MCF 10A (cell line): ENCODE measurements at regions of chr11 and their contacts with region 1.

Region 1: DNA sequence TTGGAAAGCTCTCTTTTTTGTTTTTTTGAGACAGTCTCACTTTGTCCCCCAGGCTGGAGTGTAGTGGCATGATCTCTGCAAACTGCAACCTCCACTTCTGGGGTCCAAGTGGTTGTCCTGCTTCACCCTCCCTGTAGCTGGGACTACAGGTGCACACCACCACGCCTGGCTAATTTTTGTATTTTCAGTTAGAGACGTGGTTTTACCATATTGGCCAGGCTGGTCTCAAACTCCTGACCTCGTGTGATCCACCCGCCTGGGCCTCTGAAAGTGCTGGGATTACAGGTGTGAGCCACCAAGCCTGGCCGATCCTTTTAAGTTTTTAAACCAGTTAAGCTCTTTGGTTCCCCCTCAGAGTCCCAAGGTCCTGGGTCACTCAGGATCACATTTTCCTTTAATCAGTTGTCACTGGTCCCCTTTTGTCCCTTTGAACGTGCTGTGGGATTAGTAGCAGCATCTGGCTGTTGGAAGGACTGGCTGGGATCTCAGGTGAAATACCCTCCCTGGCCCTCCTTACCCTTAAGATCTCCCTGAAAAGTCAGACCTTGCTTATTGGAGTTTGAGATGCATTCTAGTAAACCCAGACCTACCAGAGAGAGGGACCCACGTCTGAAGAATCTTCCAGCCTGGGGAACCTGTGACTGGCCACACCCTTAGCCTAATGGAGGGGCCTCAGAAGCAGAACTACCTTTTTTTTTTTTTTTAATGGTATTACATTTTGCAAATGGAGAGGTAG is 8.1 kb downstream of the MALAT1 start:
- DNase-seq: peak; percentile 70
- H3K4me3 Mint-ChIP-seq: no peak overlapping the region
- H3K27ac Mint-ChIP-seq: no peak overlapping the region
- H3K4me1 Mint-ChIP-seq: peaks cover 22% of the 10 kb centered on the region
- H3K27me3 Mint-ChIP-seq: no peaks in the 10 kb centered on the region
- CTCF ChIP-seq: no peak

Region 2: GRCh38 chr11:65254724-65255123 is 252.2 kb before region 1 on chr11:
- CTCF ChIA-PET with region 1: no interaction called
- POLR2A ChIA-PET with region 1: no interaction called
- intact Hi-C with region 1: no loop called
- DNase-seq: no peak
- H3K4me3 Mint-ChIP-seq: no peak overlapping the region
- H3K27ac Mint-ChIP-seq: no peak overlapping the region
- H3K4me1 Mint-ChIP-seq: peaks cover 14% of the 10 kb centered on the region
- H3K27me3 Mint-ChIP-seq: no peaks in the 10 kb centered on the region
- CTCF ChIP-seq: no peak

Region 3: DNA sequence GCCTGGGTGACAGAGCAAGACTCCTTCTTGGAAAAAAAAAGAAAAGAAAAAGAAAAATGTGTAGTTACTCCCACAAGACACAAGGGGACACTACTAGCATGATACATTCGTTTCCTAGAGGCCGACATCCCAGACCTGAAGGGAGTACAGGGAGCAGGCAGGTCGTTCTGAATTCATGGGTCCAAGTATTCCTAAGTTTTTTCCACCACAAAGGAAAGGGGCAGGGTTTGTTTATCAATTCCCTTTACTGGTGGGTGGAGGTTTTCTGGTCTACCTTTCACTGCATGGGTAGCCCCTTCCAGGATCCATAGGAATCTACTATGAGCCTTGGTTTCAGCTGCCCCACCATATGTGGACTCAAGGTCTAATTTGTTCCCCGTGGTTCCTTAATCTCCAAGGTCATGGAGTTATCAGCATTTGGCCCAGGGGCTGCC is 140.6 kb before region 1 on chr11:
- CTCF ChIA-PET with region 1: interaction called, 24 read pairs
- POLR2A ChIA-PET with region 1: interaction called, 7 read pairs
- intact Hi-C with region 1: loop called (anchors 1 kb)
- DNase-seq: peak; percentile 87
- H3K4me3 Mint-ChIP-seq: no peak overlapping the region
- H3K27ac Mint-ChIP-seq: no peak overlapping the region
- H3K4me1 Mint-ChIP-seq: peaks cover 9% of the 10 kb centered on the region
- H3K27me3 Mint-ChIP-seq: no peaks in the 10 kb centered on the region
- CTCF ChIP-seq: peak; percentile 72

Region 4: GRCh38 chr11:65440831-65441499 is 66.0 kb before region 1 on chr11:
- CTCF ChIA-PET with region 1: interaction called, 11 read pairs
- POLR2A ChIA-PET with region 1: interaction called, 213 read pairs
- intact Hi-C with region 1: no loop called
- DNase-seq: peak; percentile 40
- H3K4me3 Mint-ChIP-seq: peak overlapping the region; percentile 41
- H3K27ac Mint-ChIP-seq: peak overlapping the region; percentile 93
- H3K4me1 Mint-ChIP-seq: peaks cover 72% of the 10 kb centered on the region
- H3K27me3 Mint-ChIP-seq: no peaks in the 10 kb centered on the region
- CTCF ChIP-seq: no peak

Region 5: DNA sequence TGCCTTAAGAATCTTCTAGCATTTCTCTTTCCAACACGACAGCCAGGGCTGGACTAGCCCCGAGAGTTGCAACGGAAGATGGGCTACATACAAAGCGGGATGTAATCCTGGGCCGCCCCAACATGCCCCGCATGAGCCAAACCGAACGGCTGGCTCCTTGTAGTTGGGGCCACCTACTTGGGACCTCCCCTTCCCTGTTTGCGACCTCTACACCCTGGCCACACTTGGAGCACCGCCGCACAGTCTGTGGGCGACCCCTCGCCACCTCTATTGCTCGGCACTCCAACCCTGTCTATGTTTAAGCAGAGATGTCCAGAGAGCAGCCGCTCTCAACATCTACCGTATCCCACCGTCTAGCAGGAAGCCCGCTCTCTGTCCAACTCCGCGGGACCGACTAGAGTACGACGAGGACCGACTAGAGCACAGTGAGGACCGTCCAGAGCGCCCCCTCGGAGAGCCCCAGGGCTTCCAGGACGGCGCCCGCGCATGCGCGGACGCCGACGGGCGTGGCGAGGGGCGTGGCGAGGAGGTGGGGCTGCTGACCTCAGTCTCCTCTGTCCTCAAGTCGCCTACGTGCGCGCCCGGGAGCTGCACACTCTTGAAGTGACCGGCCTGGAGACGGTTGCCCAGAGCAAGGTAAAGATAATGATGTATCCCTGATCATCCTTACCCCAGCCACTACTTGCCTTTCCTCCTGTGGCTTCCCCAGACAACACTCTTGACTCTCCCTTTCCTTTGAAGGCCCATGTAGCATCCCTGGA is 52.1 kb before region 1 on chr11:
- CTCF ChIA-PET with region 1: interaction called, 5 read pairs
- POLR2A ChIA-PET with region 1: interaction called, 213 read pairs
- intact Hi-C with region 1: no loop called
- DNase-seq: no peak
- H3K4me3 Mint-ChIP-seq: peak overlapping the region; percentile 66
- H3K27ac Mint-ChIP-seq: peak overlapping the region; percentile 27
- H3K4me1 Mint-ChIP-seq: peaks cover 9% of the 10 kb centered on the region
- H3K27me3 Mint-ChIP-seq: no peaks in the 10 kb centered on the region
- CTCF ChIP-seq: no peak

Region 6: DNA sequence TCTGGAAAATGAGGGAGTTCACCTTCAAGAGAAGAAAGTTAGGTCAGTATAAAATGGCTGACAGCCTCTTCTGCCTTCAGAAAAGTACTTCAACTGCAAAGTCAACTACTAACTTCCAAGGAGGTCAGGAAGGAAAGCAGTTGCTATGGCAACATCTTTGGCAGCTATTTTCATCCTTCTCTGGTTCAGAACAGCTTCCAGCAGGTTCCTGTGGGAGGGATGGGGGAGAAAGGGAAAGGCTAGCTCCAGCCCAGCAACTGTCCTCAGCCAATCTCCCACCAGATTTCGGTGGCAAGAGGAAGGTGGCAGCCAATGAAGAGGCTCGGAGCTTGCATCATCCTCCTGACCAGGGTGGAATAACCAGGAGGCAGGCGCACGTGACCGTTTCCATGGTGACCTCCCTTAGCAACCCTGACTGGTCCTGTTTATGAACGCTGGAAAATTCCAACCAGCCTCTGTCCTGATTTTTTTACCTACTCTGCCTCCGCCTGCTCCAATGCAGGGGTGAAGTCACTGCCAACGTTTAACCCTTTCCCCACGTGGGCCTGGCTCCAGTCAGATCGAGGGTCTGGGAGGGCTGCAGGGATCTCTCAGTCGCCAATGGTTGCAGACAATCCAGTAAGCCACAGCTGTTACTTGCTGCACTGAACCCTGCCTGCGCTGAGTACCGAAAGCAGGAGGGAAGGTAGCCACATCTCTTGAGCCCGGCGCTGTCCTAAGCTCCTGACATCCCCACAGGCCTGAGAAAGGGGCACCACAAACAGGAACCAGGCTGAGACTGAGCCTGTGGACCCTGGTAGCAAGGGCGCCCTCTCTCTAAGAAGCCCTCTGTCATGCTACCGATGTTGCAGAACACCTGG is 19.3 kb before region 1 on chr11:
- CTCF ChIA-PET with region 1: interaction called, 10 read pairs
- POLR2A ChIA-PET with region 1: interaction called, 1,360 read pairs
- intact Hi-C with region 1: no loop called
- DNase-seq: peak; percentile 99
- H3K4me3 Mint-ChIP-seq: peak overlapping the region; percentile 24
- H3K27ac Mint-ChIP-seq: peak overlapping the region; percentile 79
- H3K4me1 Mint-ChIP-seq: peaks cover 47% of the 10 kb centered on the region
- H3K27me3 Mint-ChIP-seq: no peaks in the 10 kb centered on the region
- CTCF ChIP-seq: no peak

Region 7: GRCh38 chr11:65551572-65552398 is 44.8 kb after region 1 on chr11:
- CTCF ChIA-PET with region 1: no interaction called
- POLR2A ChIA-PET with region 1: no interaction called
- intact Hi-C with region 1: no loop called
- DNase-seq: peak; percentile 48
- H3K4me3 Mint-ChIP-seq: no peak overlapping the region
- H3K27ac Mint-ChIP-seq: no peak overlapping the region
- H3K4me1 Mint-ChIP-seq: peaks cover 23% of the 10 kb centered on the region
- H3K27me3 Mint-ChIP-seq: no peaks in the 10 kb centered on the region
- CTCF ChIP-seq: peak; percentile 62